ENCODE measurements at regions of chr1 and their contacts with region 1.

Region 1: DNA sequence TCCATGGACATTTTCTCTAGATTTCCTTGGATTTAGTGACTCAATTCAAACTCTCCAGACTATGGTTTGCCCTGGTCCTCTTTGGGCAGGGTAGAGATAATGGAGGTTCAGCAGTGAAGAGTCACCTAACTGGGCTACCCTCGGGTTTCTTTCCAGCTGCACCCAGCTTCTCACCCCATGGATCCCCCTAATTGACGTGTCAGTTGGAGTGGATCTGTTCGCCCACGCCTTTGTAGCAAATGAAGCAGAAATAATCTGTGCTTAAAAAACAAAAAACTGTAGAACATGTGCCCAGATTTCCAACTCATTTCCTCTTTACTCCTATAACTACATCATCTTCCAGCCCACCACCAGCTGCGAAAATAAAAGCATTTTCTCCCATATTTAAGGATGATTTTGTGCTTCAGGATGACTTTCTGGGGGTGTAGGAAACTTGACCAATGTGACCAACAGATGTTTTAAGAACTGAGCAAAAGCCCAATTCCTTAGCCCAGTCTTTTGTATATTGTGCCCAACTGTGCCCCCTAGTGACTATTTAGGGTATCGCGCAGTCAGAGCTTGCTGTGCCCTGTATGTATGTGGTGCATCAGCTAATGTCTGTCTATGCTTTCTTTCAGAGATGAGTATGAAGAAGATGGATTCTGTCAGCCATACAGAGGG is 66.5 kb upstream of the UBE2U start:
- DNase-seq: peak; percentile 97
- H3K4me3 ChIP-seq: no peak overlapping the region
- H3K27ac ChIP-seq: no peak overlapping the region
- H3K4me1 ChIP-seq: no peaks in the 10 kb centered on the region
- H3K27me3 ChIP-seq: no peaks in the 10 kb centered on the region
- CTCF ChIP-seq: peak; percentile 78 to 93 (median 86)
- EP300 ChIP-seq: no peak
- POLR2A ChIP-seq: no peak

Region 2: DNA sequence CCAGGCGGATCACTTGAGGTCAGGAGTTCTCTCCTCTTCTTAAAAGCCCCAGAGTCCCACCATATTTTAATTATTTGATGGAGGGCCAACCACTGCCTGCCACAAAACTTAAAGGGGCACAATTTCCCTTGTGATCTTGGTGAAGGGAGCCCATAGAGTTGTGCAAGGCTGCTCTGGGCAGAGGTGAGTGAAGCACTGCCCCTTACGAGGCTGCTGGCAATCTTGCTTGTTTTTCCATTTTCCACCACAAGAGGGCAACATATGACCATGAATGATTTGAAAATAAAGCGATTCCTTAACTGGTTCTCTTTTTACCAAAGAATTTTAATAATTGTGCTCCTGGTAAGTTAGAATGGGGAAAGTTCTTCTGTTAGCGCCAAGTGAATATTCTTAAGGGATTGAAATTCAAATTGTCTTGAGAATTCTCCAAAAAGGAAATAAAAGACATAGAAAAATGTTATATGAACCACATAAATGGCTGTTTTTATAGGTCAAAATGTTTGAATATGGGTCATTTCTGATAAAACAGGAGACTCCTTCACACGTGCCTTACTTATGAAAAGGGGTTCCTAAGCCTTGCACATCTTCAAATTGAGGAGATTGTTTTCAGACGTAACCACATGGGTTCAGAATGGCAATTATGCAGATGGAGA is 521.0 kb before region 1 on chr1:
- intact Hi-C with region 1: loop called (anchors 5 kb)
- DNase-seq: no peak
- H3K4me3 ChIP-seq: no peak overlapping the region
- H3K27ac ChIP-seq: no peak overlapping the region
- H3K4me1 ChIP-seq: peaks cover 4 to 15% (median 8%) of the 10 kb centered on the region in 4 donors
- H3K27me3 ChIP-seq: no peaks in the 10 kb centered on the region
- CTCF ChIP-seq: peak; percentile 78 to 84 (median 80)
- EP300 ChIP-seq: no peak
- POLR2A ChIP-seq: no peak

Region 3: DNA sequence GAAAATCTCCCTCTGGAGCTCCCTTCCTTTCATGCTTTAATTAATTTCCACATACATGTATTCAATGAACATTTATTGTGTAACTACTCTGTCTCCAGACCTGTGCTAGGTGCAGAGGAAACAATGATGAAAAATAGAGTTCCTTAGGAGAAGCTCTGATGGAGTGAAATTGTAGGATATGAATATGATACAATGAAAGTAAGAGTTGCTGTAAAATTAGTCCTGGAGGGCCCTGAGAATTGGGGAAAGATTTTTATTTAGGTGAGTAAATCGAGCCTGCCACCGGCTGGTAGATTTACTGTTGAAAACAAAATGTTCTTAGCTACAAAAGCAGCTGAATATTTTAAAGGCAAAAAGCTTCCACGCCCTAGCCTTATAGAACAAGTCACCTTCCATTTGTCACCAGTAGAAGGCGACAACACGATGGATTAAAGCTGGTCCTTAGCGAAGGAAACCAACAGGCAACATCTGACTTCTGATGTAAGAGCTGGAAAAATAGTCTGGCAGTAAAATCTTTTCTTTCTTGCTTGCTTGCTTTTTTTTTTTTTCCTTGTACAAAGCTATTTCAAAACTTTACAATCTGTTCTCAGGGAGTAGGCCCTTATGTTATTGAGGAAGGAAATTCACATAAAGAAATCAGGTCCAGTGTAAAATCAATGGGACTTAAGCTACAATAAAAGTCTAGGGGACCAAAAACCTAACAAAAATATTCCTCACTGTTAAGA is 445.0 kb before region 1 on chr1:
- intact Hi-C with region 1: loop called (anchors 5 kb)
- DNase-seq: no peak
- H3K4me3 ChIP-seq: no peak overlapping the region
- H3K27ac ChIP-seq: peak overlapping the region; percentile 19 to 44 (median 22)
- H3K4me1 ChIP-seq: peaks cover 5 to 21% (median 7%) of the 10 kb centered on the region in 4 donors
- H3K27me3 ChIP-seq: no peaks in the 10 kb centered on the region
- CTCF ChIP-seq: peak; percentile 69 to 73 (median 72)
- EP300 ChIP-seq: no peak
- POLR2A ChIP-seq: no peak

Region 4: DNA sequence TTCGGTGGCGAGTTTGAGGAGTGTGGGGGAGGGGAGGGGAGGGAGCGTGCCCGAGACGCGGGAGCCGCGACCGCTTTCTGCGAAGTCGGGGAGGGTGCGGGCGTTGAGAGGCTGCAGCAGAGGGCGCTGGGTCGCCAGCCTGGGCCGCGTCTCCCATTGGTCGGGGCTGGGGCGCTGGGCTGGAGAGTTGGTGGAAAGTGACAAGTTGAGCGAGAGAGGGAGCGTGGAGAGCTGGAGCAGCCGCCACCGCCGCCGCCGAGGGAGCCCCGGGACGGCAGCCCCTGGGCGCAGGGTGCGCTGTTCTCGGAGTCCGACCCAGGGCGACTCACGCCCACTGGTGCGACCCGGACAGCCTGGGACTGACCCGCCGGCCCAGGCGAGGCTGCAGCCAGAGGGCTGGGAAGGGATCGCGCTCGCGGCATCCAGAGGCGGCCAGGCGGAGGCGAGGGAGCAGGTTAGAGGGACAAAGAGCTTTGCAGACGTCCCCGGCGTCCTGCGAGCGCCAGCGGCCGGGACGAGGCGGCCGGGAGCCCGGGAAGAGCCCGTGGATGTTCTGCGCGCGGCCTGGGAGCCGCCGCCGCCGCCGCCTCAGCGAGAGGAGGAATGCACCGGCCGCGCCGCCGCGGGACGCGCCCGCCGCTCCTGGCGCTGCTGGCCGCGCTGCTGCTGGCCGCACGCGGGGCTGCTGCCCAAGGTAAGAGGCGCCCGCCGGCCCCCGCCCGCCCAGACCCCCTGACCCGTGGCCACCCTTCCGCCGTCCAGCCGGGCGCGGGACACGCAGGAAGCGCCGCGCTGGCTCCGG is 362.9 kb before region 1 on chr1 and contains the start of gene ROR1:
- intact Hi-C with region 1: loop called (anchors 5 kb)
- DNase-seq: peak; percentile 93
- H3K4me3 ChIP-seq: peak within 1 kb of the TSS; percentile 62 to 83 (median 70)
- H3K27ac ChIP-seq: peak within 1 kb of the TSS; percentile 76 to 87 (median 82)
- H3K4me1 ChIP-seq: peaks cover 6 to 31% (median 21%) of the 10 kb centered on the region in 4 donors
- H3K27me3 ChIP-seq: peaks cover 0 to 15% (median 0%) of the 10 kb centered on the region in 4 donors
- CTCF ChIP-seq: peak; percentile 47 to 64 (median 57)
- EP300 ChIP-seq: no peak
- POLR2A ChIP-seq: no peak
- total RNA-seq, gene ROR1: 5.1 to 7.3 (median 6.5) TPM

Region 5: DNA sequence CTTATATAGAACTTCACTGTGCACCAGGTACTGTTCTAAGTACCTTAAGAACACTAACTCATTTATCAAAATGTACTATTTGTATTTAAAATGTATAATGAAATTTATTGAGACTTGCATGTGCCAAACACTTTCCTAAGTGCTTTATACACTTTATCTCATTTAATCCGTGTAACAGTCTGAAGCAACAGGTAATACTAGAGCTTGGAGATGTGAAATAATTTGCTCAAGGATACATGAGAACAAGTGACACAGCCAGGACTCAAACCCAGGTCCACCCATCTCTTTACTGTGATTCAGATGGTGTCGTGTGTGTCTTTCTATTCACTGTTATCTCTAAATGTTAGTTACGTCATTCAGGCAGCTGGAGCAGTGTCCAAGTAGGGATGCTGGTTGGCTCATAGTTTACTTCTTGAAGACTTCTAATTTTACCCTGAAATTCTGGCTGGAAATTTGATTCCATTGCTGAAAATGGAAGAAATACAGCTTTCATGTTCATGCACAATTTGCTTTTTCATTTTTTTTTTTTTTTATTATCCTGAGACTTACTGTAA is 103.1 kb before region 1 on chr1:
- intact Hi-C with region 1: no loop called
- DNase-seq: no peak
- H3K4me3 ChIP-seq: no peak overlapping the region
- H3K27ac ChIP-seq: no peak overlapping the region
- H3K4me1 ChIP-seq: peaks cover under 1 to 7% (median 2%) of the 10 kb centered on the region in 4 donors
- H3K27me3 ChIP-seq: no peaks in the 10 kb centered on the region
- CTCF ChIP-seq: no peak
- EP300 ChIP-seq: no peak
- POLR2A ChIP-seq: no peak

Region 6: GRCh38 chr1:64098846-64099606 is 37.9 kb before region 1 on chr1:
- intact Hi-C with region 1: no loop called
- DNase-seq: no peak
- H3K4me3 ChIP-seq: no peak overlapping the region
- H3K27ac ChIP-seq: no peak overlapping the region
- H3K4me1 ChIP-seq: peaks cover 0 to 4% (median 0%) of the 10 kb centered on the region in 4 donors
- H3K27me3 ChIP-seq: no peaks in the 10 kb centered on the region
- CTCF ChIP-seq: no peak
- EP300 ChIP-seq: no peak
- POLR2A ChIP-seq: no peak

Region 7: DNA sequence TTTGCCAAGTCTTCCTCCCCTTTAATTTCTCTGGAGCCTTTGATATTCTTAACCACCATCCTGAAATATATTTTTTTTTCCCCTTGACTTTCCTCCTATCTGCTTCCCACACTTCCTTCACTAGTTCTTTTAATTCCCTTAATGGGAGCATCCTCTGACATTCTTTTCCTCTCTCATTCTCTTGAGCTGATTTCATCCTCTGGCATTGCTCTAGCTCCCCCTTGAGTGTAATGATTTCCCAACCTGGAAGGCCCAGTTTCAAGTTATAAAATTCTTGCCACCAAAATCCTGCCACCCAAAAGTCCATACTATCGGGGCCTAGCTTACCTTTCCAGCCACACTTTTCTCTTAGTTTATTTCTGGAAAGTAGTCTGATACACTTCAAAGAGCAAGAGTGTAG is 27.1 kb after region 1 on chr1:
- intact Hi-C with region 1: no loop called
- DNase-seq: no peak
- H3K4me3 ChIP-seq: no peak overlapping the region
- H3K27ac ChIP-seq: peak overlapping the region in 3 of 4 donors; percentile 20 to 43 (median 40)
- H3K4me1 ChIP-seq: peaks cover 0 to 20% (median 16%) of the 10 kb centered on the region in 4 donors
- H3K27me3 ChIP-seq: no peaks in the 10 kb centered on the region
- CTCF ChIP-seq: peak in 2 of 3 experiments; percentile 18 to 35
- EP300 ChIP-seq: no peak
- POLR2A ChIP-seq: no peak